MCF 10A (cell line): ENCODE measurements at regions of chr11 and their contacts with region 1.

Region 1: GRCh38 chr11:76788661-76789439 is 5.7 kb downstream of the TSKU start:
- DNase-seq: peak; percentile 94
- H3K4me3 Mint-ChIP-seq: peak overlapping the region; percentile 51
- H3K27ac Mint-ChIP-seq: peak overlapping the region; percentile 69
- H3K4me1 Mint-ChIP-seq: peaks cover 84% of the 10 kb centered on the region
- H3K27me3 Mint-ChIP-seq: no peaks in the 10 kb centered on the region
- CTCF ChIP-seq: no peak

Region 2: GRCh38 chr11:76768088-76768908 is 20.6 kb before region 1 on chr11:
- CTCF ChIA-PET with region 1: interaction called, 8 read pairs
- POLR2A ChIA-PET with region 1: interaction called, 83 read pairs
- intact Hi-C with region 1: no loop called
- DNase-seq: peak; percentile 64
- H3K4me3 Mint-ChIP-seq: peak overlapping the region; percentile 4
- H3K27ac Mint-ChIP-seq: peak overlapping the region; percentile 22
- H3K4me1 Mint-ChIP-seq: peaks cover 61% of the 10 kb centered on the region
- H3K27me3 Mint-ChIP-seq: no peaks in the 10 kb centered on the region
- CTCF ChIP-seq: no peak

Region 3: GRCh38 chr11:76799066-76799804 is 10.4 kb after region 1 on chr11:
- CTCF ChIA-PET with region 1: interaction called, 17 read pairs
- POLR2A ChIA-PET with region 1: interaction called, 5 read pairs
- intact Hi-C with region 1: no loop called
- DNase-seq: peak; percentile 77
- H3K4me3 Mint-ChIP-seq: no peak overlapping the region
- H3K27ac Mint-ChIP-seq: no peak overlapping the region
- H3K4me1 Mint-ChIP-seq: peaks cover 30% of the 10 kb centered on the region
- H3K27me3 Mint-ChIP-seq: no peaks in the 10 kb centered on the region
- CTCF ChIP-seq: peak; percentile 85